Activated CD8-positive, alpha-beta T cell treated with anti-CD3 and anti-CD28 coated beads for 36 hours (primary cell): ENCODE measurements at regions of chr13 and their contacts with region 1.

Region 1: GRCh38 chr13:20475927-20476691 is 49.5 kb downstream of the CRYL1 start:
- DNase-seq: peak; percentile 78
- ATAC-seq: peak; percentile 92
- H3K4me3 Mint-ChIP-seq: peak overlapping the region; percentile 63
- H3K27ac Mint-ChIP-seq: peak overlapping the region; percentile 90
- H3K4me1 Mint-ChIP-seq: peaks cover 45% of the 10 kb centered on the region
- H3K27me3 Mint-ChIP-seq: no peaks in the 10 kb centered on the region
- CTCF ChIP-seq: no peak

Region 2: DNA sequence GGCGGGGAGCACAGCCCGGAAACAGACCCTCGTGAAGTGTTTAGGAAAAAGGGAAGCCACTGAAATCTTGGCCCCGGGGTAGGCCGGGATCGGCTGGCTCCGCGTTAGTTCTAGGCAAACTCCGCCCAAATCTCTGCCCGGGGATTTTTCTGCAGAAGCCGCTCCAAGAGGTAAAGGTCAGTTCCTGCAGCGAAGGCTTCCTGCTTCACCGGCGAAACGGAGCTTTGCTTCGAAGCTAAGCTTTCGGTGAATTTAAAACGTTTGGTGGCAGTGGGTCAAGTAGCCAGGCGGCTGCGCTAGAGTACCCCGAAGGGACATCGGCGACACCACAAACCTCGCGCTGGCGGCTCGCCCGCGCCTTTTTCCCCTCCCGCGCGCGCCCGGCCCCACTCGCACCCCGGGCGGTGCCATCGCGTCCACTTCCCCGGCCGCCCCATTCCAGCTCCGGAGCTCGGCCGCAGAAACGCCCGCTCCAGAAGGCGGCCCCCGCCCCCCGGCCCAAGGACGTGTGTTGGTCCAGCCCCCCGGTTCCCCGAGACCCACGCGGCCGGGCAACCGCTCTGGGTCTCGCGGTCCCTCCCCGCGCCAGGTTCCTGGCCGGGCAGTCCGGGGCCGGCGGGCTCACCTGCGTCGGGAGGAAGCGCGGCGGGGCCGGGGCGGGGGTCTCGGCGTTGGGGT is 283.8 kb before region 1 on chr13:
- CTCF ChIA-PET with region 1: interaction called, 3 read pairs
- POLR2A ChIA-PET with region 1: no interaction called
- intact Hi-C with region 1: loop called (anchors 5 kb)
- DNase-seq: peak; percentile 38
- ATAC-seq: no peak
- H3K4me3 Mint-ChIP-seq: peak overlapping the region; percentile 55
- H3K27ac Mint-ChIP-seq: no peak overlapping the region
- H3K4me1 Mint-ChIP-seq: peaks cover 23% of the 10 kb centered on the region
- H3K27me3 Mint-ChIP-seq: peaks cover 52% of the 10 kb centered on the region
- CTCF ChIP-seq: no peak

Region 3: DNA sequence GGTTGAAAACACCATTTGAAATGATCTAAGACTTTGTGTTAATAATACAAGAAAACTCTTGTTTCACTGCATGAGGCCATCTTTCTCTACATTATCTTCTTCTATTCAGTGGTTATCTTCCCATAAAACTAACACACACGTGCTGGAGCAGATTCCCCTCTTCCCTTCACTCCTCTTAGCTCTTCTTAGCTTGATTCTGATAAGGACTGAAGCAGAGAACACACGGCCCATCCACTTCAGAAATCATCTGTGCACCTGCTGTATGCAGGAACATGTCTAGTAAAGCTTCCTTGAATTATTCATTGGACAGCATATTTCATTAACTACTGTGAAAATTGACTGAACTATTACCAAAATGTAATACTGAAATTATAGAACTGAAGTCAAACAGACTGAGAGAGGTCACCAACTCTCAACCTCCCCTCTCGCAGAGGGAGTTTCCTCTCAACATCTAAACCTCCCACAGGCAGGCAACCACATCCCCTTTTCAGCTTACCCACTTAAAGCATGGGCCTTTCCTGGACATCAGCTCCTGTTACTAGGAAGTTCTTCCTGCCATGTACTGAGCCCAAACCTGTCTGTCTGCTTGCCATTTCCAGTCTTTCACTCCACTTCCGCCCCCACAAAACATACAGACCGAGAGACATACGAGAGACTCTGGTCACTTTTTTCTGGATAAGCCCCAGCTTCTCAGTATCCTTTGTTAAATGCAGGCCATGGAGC is 64.3 kb before region 1 on chr13:
- CTCF ChIA-PET with region 1: interaction called, 10 read pairs
- POLR2A ChIA-PET with region 1: interaction called, 4 read pairs
- intact Hi-C with region 1: loop called (anchors 2 kb)
- DNase-seq: peak; percentile 82
- ATAC-seq: peak; percentile 89
- H3K4me3 Mint-ChIP-seq: peak overlapping the region; percentile 26
- H3K27ac Mint-ChIP-seq: peak overlapping the region; percentile 88
- H3K4me1 Mint-ChIP-seq: peaks cover 24% of the 10 kb centered on the region
- H3K27me3 Mint-ChIP-seq: no peaks in the 10 kb centered on the region
- CTCF ChIP-seq: no peak

Region 4: DNA sequence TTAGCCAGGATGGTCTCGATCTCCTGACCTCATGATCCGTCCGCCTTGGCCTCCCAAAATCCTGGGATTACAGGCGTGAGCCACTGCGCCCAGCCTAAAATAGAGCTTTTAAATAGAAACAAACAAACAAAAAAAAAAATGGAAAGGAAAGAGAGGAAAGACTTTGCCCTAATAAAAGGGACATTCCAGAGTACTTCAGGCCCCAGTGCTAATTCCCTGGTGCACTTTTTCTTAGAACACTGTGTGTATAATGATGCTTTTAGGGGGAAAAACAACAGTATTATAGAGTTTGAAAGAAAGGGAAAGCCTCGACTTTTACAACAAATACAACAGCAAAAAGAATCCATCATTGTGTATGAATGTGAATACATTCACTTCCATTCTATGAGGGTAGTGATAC is 55.2 kb before region 1 on chr13:
- CTCF ChIA-PET with region 1: interaction called, 3 read pairs
- POLR2A ChIA-PET with region 1: interaction called, 6 read pairs
- intact Hi-C with region 1: loop called (anchors 2 kb)
- DNase-seq: no peak
- ATAC-seq: no peak
- H3K4me3 Mint-ChIP-seq: no peak overlapping the region
- H3K27ac Mint-ChIP-seq: peak overlapping the region; percentile 54
- H3K4me1 Mint-ChIP-seq: peaks cover 52% of the 10 kb centered on the region
- H3K27me3 Mint-ChIP-seq: peaks cover 1% of the 10 kb centered on the region
- CTCF ChIP-seq: no peak

Region 5: GRCh38 chr13:20647758-20648157 is 171.6 kb after region 1 on chr13:
- CTCF ChIA-PET with region 1: no interaction called
- POLR2A ChIA-PET with region 1: no interaction called
- intact Hi-C with region 1: no loop called
- DNase-seq: no peak
- ATAC-seq: no peak
- H3K4me3 Mint-ChIP-seq: no peak overlapping the region
- H3K27ac Mint-ChIP-seq: no peak overlapping the region
- H3K4me1 Mint-ChIP-seq: no peaks in the 10 kb centered on the region
- H3K27me3 Mint-ChIP-seq: no peaks in the 10 kb centered on the region
- CTCF ChIP-seq: no peak